Mammary epithelial cell (primary cell): ENCODE measurements at regions of chr18 and their contacts with region 1.

Region 1: DNA sequence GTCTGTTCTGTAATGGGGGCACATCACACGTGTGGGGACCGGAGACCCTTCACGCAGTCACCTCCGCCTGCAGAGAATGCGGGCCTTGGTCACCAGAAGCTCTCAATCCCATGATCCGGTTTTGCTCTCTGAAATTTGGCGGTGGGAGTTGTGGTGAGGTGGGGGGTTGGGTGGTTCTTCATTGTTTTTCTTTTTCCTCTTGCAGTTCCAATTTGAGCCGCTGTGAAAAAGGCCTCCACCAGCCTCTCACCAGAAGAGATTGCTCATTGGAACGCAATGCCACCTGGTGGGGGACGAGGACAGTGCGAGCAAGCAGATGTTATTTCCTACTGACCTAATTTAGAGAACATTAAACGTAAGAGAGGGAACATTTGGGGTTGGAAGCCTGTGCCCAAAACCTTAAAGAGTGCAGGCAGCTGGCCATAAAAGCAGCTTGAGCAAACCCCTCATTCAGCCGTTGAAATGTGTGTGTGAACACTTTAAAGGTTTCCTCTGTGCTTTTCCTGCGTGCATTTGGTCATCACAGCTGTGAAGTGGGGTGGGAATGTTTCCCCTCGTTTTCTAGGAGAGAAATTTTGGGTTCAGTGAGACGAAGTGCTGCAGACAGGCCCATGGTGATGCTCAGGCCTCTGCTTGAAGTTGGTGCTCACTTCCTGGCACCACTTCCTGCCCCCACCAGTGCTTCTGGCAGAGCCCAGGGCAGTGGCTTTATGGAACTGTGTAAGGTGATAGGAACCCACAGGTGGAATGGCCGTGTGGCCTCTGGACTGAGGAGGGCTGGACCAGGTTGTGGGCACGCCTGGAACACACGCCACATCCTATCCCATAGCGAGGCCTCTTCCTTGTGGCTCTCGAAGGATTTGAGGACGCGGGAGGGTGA is 61.7 kb downstream of the ZCCHC2 start:
- DNase-seq: peak; percentile 67
- H3K4me3 ChIP-seq: no peak overlapping the region
- H3K27ac ChIP-seq: no peak overlapping the region
- H3K4me1 ChIP-seq: peaks cover 6% of the 10 kb centered on the region
- H3K27me3 ChIP-seq: no peaks in the 10 kb centered on the region
- CTCF ChIP-seq: peak; percentile 98 to 99

Region 2: GRCh38 chr18:62186774-62187542 is 397.5 kb before region 1 on chr18 and contains the starts of genes PIGN and RELCH:
- CTCF ChIA-PET with region 1: no interaction called
- dilution Hi-C with region 1: no loop called
- in situ Hi-C with region 1: no loop called
- intact Hi-C with region 1: loop called (anchors 1 kb)
- DNase-seq: peak; percentile 99
- H3K4me3 ChIP-seq: peak within 1 kb of the TSS; percentile 73 to 98 (median 80)
- H3K27ac ChIP-seq: peak within 1 kb of the TSS; percentile 68
- H3K4me1 ChIP-seq: no peaks in the 10 kb centered on the region
- H3K27me3 ChIP-seq: no peaks in the 10 kb centered on the region
- CTCF ChIP-seq: no peak
- total RNA-seq, gene PIGN: 46.3 to 49.5 TPM
- total RNA-seq, gene RELCH: 24.6 to 36.5 TPM

Region 3: GRCh38 chr18:62425465-62426195 is 158.9 kb before region 1 on chr18:
- CTCF ChIA-PET with region 1: interaction called, 3 read pairs
- dilution Hi-C with region 1: no loop called
- in situ Hi-C with region 1: no loop called
- intact Hi-C with region 1: loop called (anchors 1 kb)
- DNase-seq: peak; percentile 93
- H3K4me3 ChIP-seq: peak overlapping the region in 2 of 3 experiments; percentile 1 to 9
- H3K27ac ChIP-seq: peak overlapping the region; percentile 41
- H3K4me1 ChIP-seq: peaks cover 12% of the 10 kb centered on the region
- H3K27me3 ChIP-seq: no peaks in the 10 kb centered on the region
- CTCF ChIP-seq: peak; percentile 83 to 91

Region 4: DNA sequence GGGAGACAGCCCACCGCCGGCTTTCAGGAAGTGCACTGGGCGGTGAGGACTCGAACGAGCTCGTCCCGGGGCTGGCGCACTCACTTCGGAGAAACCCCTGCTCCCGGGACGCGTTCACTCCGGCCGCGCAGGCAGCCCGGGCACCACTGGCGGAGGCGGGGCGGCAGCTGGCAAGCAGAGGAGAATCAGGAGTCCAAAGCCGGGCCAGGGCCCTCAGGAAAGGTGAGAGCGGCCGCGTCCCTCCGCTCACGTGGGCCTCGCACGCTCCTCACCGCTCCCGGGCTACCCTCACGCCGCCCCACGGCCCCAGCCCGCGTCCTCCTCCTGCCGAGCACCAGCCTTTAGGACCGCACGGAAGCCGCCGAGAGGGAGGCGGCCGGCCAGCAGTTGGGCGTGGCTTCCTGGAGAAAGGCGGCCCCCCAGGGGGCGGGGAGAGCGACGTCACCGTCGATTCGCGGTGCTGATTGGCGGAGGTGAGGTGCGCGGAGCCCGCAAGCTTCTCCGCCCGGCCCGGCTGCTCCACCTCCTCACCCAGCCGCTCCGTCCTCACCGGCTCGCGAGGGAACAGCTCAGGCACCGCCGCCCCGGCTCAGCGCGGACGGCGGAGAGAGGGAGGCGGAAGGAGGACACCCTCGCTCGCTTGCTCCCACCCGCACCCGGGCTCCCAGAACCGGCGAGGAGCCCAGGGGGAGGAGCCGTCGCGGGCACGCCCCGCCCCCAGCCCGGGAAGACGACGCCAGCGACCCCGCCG is 61.8 kb before region 1 on chr18 and contains the start of gene ZCCHC2:
- CTCF ChIA-PET with region 1: no interaction called
- dilution Hi-C with region 1: no loop called
- in situ Hi-C with region 1: no loop called
- intact Hi-C with region 1: loop called (anchors 1 kb)
- DNase-seq: peak; percentile 98
- H3K4me3 ChIP-seq: peak within 1 kb of the TSS; percentile 96 to 97 (median 96)
- H3K27ac ChIP-seq: peak within 1 kb of the TSS; percentile 83
- H3K4me1 ChIP-seq: peaks cover 25% of the 10 kb centered on the region
- H3K27me3 ChIP-seq: no peaks in the 10 kb centered on the region
- CTCF ChIP-seq: no peak
- total RNA-seq, gene ZCCHC2: 13.7 to 16.2 TPM

Region 5: GRCh38 chr18:62682371-62682770 is 97.9 kb after region 1 on chr18:
- CTCF ChIA-PET with region 1: no interaction called
- dilution Hi-C with region 1: no loop called
- in situ Hi-C with region 1: no loop called
- intact Hi-C with region 1: no loop called
- DNase-seq: no peak
- H3K4me3 ChIP-seq: no peak overlapping the region
- H3K27ac ChIP-seq: no peak overlapping the region
- H3K4me1 ChIP-seq: no peaks in the 10 kb centered on the region
- H3K27me3 ChIP-seq: no peaks in the 10 kb centered on the region
- CTCF ChIP-seq: no peak

Region 6: GRCh38 chr18:62802523-62802922 is 218.0 kb after region 1 on chr18:
- CTCF ChIA-PET with region 1: no interaction called
- dilution Hi-C with region 1: no loop called
- in situ Hi-C with region 1: no loop called
- intact Hi-C with region 1: loop called (anchors 2 kb)
- DNase-seq: no peak
- H3K4me3 ChIP-seq: no peak overlapping the region
- H3K27ac ChIP-seq: no peak overlapping the region
- H3K4me1 ChIP-seq: no peaks in the 10 kb centered on the region
- H3K27me3 ChIP-seq: no peaks in the 10 kb centered on the region
- CTCF ChIP-seq: peak in 1 of 2 donors; percentile 47

Region 7: GRCh38 chr18:62982600-62983251 is 398.2 kb after region 1 on chr18:
- CTCF ChIA-PET with region 1: no interaction called
- dilution Hi-C with region 1: no loop called
- in situ Hi-C with region 1: no loop called
- intact Hi-C with region 1: loop called (anchors 1 kb)
- DNase-seq: peak; percentile 28
- H3K4me3 ChIP-seq: no peak overlapping the region
- H3K27ac ChIP-seq: no peak overlapping the region
- H3K4me1 ChIP-seq: no peaks in the 10 kb centered on the region
- H3K27me3 ChIP-seq: no peaks in the 10 kb centered on the region
- CTCF ChIP-seq: peak; percentile 65 to 79